Sigmoid colon (tissue), 7 donors: ENCODE measurements at regions of chr15 and their contacts with region 1.

Region 1: GRCh38 chr15:70763120-70763878 is at the start of gene UACA:
- DNase-seq: peak; percentile 98
- H3K4me3 ChIP-seq: peak within 1 kb of the TSS; percentile 65 to 95 (median 82)
- H3K27ac ChIP-seq: peak within 1 kb of the TSS; percentile 89 to 95 (median 92)
- H3K4me1 ChIP-seq: peaks cover 0 to 18% (median 9%) of the 10 kb centered on the region in 4 donors
- H3K27me3 ChIP-seq: no peaks in the 10 kb centered on the region
- CTCF ChIP-seq: no peak
- EP300 ChIP-seq: no peak
- POLR2A ChIP-seq: peak; percentile 72 to 82
- total RNA-seq, gene UACA: 19.1 to 51.0 (median 29.4) TPM

Region 2: GRCh38 chr15:70690491-70691257 is 72.6 kb before region 1 on chr15:
- intact Hi-C with region 1: loop called (anchors 10 kb)
- DNase-seq: no peak
- H3K4me3 ChIP-seq: no peak overlapping the region
- H3K27ac ChIP-seq: no peak overlapping the region
- H3K4me1 ChIP-seq: no peaks in the 10 kb centered on the region
- H3K27me3 ChIP-seq: no peaks in the 10 kb centered on the region
- CTCF ChIP-seq: no peak
- EP300 ChIP-seq: no peak
- POLR2A ChIP-seq: no peak